Activated CD8-positive, alpha-beta T cell treated with anti-CD3 and anti-CD28 coated beads, Interleukin-2, amount 10 ng/mL, durations not matched to agents 7 days and 5 days (primary cell): ENCODE measurements at regions of chr1 and their contacts with region 1.

Region 1: DNA sequence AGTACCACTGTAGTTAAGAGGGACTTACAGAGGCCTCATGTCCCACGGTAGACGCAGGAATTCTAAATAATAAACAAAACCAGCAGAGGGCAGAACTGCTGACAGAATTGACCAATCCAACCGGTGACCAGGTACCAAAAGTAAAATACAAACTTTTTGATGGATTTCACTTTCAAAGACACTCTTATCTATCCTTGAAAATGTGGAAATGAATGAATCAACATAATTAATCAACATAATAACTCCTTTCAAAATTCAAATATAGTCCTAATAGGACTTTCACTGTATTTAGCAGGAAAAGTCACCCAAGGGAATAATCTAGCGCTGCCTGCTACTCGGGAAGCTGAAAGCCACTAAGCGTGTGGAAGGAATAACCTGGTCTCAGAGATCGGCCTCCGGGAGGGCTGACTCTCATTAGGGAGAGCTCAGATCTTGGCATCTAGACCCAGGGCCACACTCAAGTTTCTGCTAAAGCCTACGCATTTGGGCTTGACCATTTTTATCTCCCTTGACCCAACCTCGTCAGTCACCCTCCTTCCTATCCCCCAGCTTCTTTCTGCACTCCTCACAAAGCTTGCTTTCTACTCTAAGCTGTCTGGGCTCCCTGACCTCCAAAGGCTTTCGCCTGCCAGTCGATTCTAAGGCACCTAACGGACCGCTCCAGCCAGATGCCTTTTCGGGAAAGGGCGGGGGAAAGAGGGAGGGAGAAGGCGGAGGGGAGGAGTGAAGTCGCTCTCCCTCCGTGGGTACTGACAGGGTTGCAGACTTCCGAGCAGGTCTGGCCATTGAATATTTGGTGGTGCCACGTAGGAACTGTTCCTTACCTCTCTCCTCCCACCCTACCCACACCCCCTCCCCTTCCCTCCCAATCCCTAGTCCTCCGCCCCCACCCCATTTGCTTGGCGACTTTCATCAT is 1.6 kb downstream of the COL11A1 start:
- DNase-seq: no peak
- ATAC-seq: no peak
- H3K4me3 Mint-ChIP-seq: no peak overlapping the region
- H3K27ac Mint-ChIP-seq: no peak overlapping the region
- H3K4me1 Mint-ChIP-seq: peaks cover 5% of the 10 kb centered on the region
- H3K27me3 Mint-ChIP-seq: peaks cover 15% of the 10 kb centered on the region

Region 2: DNA sequence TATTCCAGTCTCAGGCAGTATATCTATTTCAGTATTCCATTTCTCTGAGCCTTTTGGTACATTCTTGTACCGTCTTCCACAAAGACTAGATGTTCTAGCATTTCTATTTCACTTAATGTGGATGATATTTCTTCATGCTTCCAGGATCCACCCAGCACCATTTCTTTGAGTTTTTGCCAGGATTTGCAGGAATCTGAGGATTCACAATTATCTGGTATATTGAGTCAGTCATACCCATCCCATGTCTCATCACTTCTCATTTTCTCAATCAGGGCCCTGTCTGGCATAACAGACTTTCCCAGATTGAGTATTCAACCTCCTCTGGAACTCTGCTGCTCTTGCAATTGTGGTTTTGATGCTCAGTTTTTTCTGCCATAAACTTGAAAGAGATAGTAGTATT is 22.6 kb after region 1 on chr1:
- CTCF ChIA-PET with region 1: no interaction called
- POLR2A ChIA-PET with region 1: no interaction called
- DNase-seq: no peak
- ATAC-seq: no peak
- H3K4me3 Mint-ChIP-seq: no peak overlapping the region
- H3K27ac Mint-ChIP-seq: no peak overlapping the region
- H3K4me1 Mint-ChIP-seq: no peaks in the 10 kb centered on the region
- H3K27me3 Mint-ChIP-seq: no peaks in the 10 kb centered on the region

Region 3: DNA sequence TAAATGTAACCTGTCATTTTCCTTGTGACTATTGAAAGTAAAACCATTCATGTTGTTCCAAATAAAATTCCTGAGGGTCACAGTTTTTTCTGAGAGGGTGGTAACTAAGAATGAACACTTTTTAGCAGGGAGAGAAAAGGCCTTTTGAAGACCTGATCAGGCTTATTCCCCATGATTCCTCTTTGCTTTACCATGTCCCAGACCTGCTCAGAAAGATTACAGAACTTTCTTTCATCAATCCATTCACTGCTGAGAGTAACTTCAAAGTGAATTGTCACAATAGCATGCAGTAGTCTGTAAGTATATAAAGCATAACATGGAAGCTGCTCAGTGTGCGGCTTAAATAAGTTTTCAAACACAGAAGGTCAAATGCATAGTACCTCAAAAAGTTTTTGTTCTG is 203.1 kb after region 1 on chr1:
- CTCF ChIA-PET with region 1: no interaction called
- POLR2A ChIA-PET with region 1: no interaction called
- DNase-seq: no peak
- ATAC-seq: no peak
- H3K4me3 Mint-ChIP-seq: no peak overlapping the region
- H3K27ac Mint-ChIP-seq: no peak overlapping the region
- H3K4me1 Mint-ChIP-seq: no peaks in the 10 kb centered on the region
- H3K27me3 Mint-ChIP-seq: no peaks in the 10 kb centered on the region

Region 4: DNA sequence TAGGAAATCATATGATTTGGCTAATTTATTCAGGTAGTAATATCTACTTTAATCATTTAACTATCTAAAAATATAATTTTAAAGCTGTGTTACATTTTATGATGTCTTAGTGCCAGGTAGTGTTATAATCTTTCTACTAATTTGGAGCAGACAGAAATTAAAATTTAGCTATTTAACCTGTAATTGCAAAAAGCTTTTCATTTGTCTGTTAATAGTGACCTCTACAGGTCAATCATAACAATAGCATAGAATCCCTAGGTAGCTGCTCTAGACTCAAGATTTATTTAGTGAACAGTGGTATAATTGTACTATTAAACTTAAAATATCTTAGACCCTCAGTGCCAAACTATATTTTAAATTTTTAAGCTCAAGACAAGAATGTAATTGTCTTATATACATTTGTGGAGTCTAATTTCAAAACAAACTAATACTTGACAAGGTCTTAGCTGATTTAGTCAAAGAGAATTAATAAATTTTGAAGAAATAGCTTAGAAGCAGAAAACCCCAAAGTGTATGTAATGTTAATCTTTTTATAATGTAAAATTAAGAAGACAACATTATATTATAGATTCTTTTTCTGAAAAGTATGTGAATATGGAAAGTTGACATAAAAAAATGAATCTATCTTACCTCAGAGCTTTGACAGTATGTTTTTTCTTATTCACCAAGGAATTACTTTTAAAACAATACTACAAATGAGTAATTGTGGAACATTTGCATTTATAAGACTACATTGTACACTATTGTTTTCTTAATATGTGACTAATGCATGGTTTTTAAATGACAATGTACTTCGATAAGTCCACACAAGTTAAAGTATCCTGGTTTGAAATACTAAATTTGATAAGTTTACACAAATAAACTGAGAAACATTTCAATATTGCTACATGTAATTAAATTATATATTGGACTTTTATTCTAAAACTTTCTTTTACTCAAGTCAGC is 354.7 kb after region 1 on chr1:
- CTCF ChIA-PET with region 1: interaction called, 16 read pairs
- POLR2A ChIA-PET with region 1: no interaction called
- DNase-seq: no peak
- ATAC-seq: no peak
- H3K4me3 Mint-ChIP-seq: no peak overlapping the region
- H3K27ac Mint-ChIP-seq: no peak overlapping the region
- H3K4me1 Mint-ChIP-seq: no peaks in the 10 kb centered on the region
- H3K27me3 Mint-ChIP-seq: peaks cover 5% of the 10 kb centered on the region